Caco-2 (cell line): ENCODE measurements at regions of chr1 and their contacts with region 1.

Region 1: GRCh38 chr1:216600730-216601609 is 122.3 kb downstream of the ESRRG start:
- DNase-seq: peak; percentile 63 to 78
- H3K4me3 ChIP-seq: peak overlapping the region; percentile 59
- H3K4me3 Mint-ChIP-seq: peak overlapping the region; percentile 86
- H3K27ac Mint-ChIP-seq: peak overlapping the region; percentile 78
- H3K4me1 ChIP-seq: peaks cover 48% of the 10 kb centered on the region
- H3K4me1 Mint-ChIP-seq: peaks cover 32% of the 10 kb centered on the region
- H3K27me3 ChIP-seq: no peaks in the 10 kb centered on the region
- H3K27me3 Mint-ChIP-seq: no peaks in the 10 kb centered on the region
- CTCF ChIP-seq: peak; percentile 50 to 70

Region 2: GRCh38 chr1:216653031-216653430 is 52.1 kb after region 1 on chr1:
- CTCF ChIA-PET with region 1: no interaction called
- POLR2A ChIA-PET with region 1: no interaction called
- intact Hi-C with region 1: loop called (anchors 5 kb)
- DNase-seq: peak in 1 of 2 experiments; percentile 11
- H3K4me3 ChIP-seq: no peak overlapping the region
- H3K4me3 Mint-ChIP-seq: no peak overlapping the region
- H3K27ac Mint-ChIP-seq: no peak overlapping the region
- H3K4me1 ChIP-seq: peaks cover 11% of the 10 kb centered on the region; the same call in 1 of the 2 replicates
- H3K4me1 Mint-ChIP-seq: peaks cover 11% of the 10 kb centered on the region
- H3K27me3 ChIP-seq: no peaks in the 10 kb centered on the region
- H3K27me3 Mint-ChIP-seq: no peaks in the 10 kb centered on the region
- CTCF ChIP-seq: no peak

Region 3: GRCh38 chr1:216723274-216723780 is 122.4 kb after region 1 on chr1 and contains the start of gene ESRRG:
- CTCF ChIA-PET with region 1: no interaction called
- POLR2A ChIA-PET with region 1: no interaction called
- intact Hi-C with region 1: loop called (anchors 2 kb)
- DNase-seq: peak; percentile 77 to 82
- H3K4me3 ChIP-seq: peak within 1 kb of the TSS; percentile 48
- H3K4me3 Mint-ChIP-seq: peak within 1 kb of the TSS; percentile 99
- H3K27ac Mint-ChIP-seq: peak within 1 kb of the TSS; percentile 86
- H3K4me1 ChIP-seq: 0 out of 2 replicates have a peak, but pooled peaks cover 4% of the 10 kb centered on the region
- H3K4me1 Mint-ChIP-seq: peaks cover 15% of the 10 kb centered on the region
- H3K27me3 ChIP-seq: no peaks in the 10 kb centered on the region
- H3K27me3 Mint-ChIP-seq: no peaks in the 10 kb centered on the region
- CTCF ChIP-seq: no peak
- total RNA-seq, gene ESRRG: 6.6 and 8.6 TPM in 2 replicates

Region 4: GRCh38 chr1:216742625-216743024 is 141.7 kb after region 1 on chr1:
- CTCF ChIA-PET with region 1: interaction called, 3 read pairs
- POLR2A ChIA-PET with region 1: no interaction called
- intact Hi-C with region 1: loop called (anchors 2 kb)
- DNase-seq: no peak
- H3K4me3 ChIP-seq: no peak overlapping the region
- H3K4me3 Mint-ChIP-seq: no peak overlapping the region
- H3K27ac Mint-ChIP-seq: no peak overlapping the region
- H3K4me1 ChIP-seq: no peaks in the 10 kb centered on the region
- H3K4me1 Mint-ChIP-seq: no peaks in the 10 kb centered on the region
- H3K27me3 ChIP-seq: no peaks in the 10 kb centered on the region
- H3K27me3 Mint-ChIP-seq: no peaks in the 10 kb centered on the region
- CTCF ChIP-seq: peak in 1 of 2 experiments; percentile 50